ENCODE measurements at regions of chr7 and their contacts with region 1.

Region 1: DNA sequence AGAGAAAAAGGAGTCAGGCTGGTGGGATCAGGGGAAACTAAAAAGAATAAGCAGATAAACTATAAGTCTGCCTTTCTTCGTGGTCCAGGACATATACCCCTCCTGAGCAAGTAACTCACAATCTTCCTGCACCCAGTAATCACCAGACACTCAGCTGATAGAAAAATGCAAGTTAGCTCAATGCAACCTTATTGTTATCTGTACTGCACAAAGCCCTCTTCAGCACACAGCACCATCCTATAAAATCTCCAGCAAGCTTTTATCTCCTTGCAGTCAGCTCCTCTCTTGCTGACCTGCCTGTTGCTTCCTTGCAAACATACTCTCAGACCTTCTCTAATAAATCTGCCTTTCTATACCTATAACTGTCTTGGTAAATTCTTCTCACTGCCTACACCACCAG is 6.7 kb downstream of the SLC37A3 start:
- DNase-seq: no peak
- H3K4me3 ChIP-seq: no peak overlapping the region
- H3K27ac ChIP-seq: no peak overlapping the region
- H3K4me1 ChIP-seq: no peaks in the 10 kb centered on the region
- H3K27me3 ChIP-seq: no peaks in the 10 kb centered on the region
- CTCF ChIP-seq: no peak
- POLR2A ChIP-seq: no peak

Region 2: GRCh38 chr7:140403878-140404564 is 12.4 kb after region 1 on chr7 and contains the start of gene RAB19:
- intact Hi-C with region 1: no loop called
- DNase-seq: peak; percentile 57 to 59
- H3K4me3 ChIP-seq: peak within 1 kb of the TSS; percentile 9 to 62 (median 61)
- H3K27ac ChIP-seq: peak within 1 kb of the TSS; percentile 59 to 73
- H3K4me1 ChIP-seq: no peaks in the 10 kb centered on the region
- H3K27me3 ChIP-seq: no peaks in the 10 kb centered on the region
- CTCF ChIP-seq: peak in 1 of 3 donors; percentile 11
- POLR2A ChIP-seq: no peak
- total RNA-seq, gene RAB19: 2.3 to 4.2 TPM in 2 of 3 donors, not detected in the other

Region 3: DNA sequence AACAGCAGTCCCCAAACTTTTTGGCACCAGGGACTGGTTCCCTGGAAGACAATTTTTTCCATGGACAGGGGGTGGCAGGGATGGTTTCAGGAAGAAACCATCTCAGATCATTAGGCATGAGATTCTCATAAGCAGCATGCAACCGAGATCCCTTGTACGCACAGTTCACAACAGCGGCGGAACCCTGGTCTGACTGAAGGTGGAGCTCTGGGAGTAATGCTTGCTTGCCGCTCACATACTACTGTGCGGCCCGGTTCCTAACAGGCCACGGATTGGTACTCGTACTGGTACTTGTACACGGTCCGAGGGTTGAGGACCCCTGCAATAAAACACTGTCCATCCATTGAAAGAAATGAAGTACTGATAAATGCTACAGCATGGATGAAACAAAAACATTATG is 54.8 kb after region 1 on chr7:
- intact Hi-C with region 1: loop called (anchors 2 kb)
- DNase-seq: no peak
- H3K4me3 ChIP-seq: no peak overlapping the region
- H3K27ac ChIP-seq: no peak overlapping the region
- H3K4me1 ChIP-seq: no peaks in the 10 kb centered on the region
- H3K27me3 ChIP-seq: no peaks in the 10 kb centered on the region
- CTCF ChIP-seq: no peak
- POLR2A ChIP-seq: no peak

Measured in breast epithelium (tissue), 4 donors.